Activated T-helper 1 cell treated with anti-CD3 and anti-CD28 coated beads, Interleukin-12 subunit alpha, Interleukin-12 subunit beta, Interleukin-2, Interleukin-4 antibody, amounts not matched to agents 30 ng/mL and 10 ng/mL and 1 ng/mL, durations not matched to agents 14 hours and 24 hours and 36 hours (primary cell): ENCODE measurements at regions of chr3 and their contacts with region 1.

Region 1: GRCh38 chr3:134600685-134601463 is 49.9 kb downstream of the KY start:
- DNase-seq: peak; percentile 43
- H3K4me3 Mint-ChIP-seq: no peak overlapping the region
- H3K27ac Mint-ChIP-seq: no peak overlapping the region
- H3K4me1 Mint-ChIP-seq: peaks cover 7% of the 10 kb centered on the region
- H3K27me3 Mint-ChIP-seq: peaks cover 10% of the 10 kb centered on the region

Region 2: GRCh38 chr3:134640872-134641470 is 40.1 kb after region 1 on chr3:
- intact Hi-C with region 1: loop called (anchors 1 kb)
- DNase-seq: no peak
- H3K4me3 Mint-ChIP-seq: no peak overlapping the region
- H3K27ac Mint-ChIP-seq: no peak overlapping the region
- H3K4me1 Mint-ChIP-seq: no peaks in the 10 kb centered on the region
- H3K27me3 Mint-ChIP-seq: no peaks in the 10 kb centered on the region

Region 3: DNA sequence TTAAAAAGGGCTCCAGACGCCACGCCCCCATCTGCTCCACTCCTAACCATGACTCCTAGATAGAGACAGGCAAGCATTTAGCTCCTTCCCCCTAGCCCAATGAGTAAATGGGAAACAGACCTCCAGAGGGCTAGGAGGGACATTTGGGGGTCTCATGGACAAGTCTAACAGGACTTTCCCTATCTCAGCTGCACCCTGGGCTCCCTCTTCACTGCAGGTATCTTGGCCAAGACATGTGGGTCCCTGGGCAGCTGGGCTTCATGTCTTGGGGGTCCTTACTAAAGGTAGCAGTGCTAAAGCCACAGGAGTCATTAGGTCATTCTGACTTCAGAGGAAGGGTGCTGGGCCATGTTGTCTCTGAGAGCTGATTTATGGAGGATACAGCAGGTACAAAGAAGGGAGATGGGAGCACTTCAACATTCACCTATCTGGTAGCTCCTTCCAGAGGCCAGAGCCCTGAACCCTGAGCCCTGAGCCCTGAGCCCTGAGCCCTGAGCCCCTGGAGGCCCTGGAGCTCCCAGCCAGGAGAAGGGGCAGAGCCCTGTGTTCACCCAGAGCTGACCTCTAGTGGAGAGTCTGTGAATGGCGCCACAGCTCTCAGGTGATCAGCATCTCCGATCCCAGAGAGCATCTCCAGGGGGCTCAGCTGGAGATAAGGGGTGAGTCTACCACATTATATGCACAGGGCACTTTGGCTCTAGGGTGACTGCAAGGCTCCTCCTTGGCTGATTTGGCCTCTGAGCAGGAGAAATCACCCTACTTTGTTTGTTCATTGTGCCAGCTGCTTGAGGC is 154.1 kb after region 1 on chr3:
- intact Hi-C with region 1: loop called (anchors 1 kb)
- DNase-seq: peak; percentile 6
- H3K4me3 Mint-ChIP-seq: no peak overlapping the region
- H3K27ac Mint-ChIP-seq: no peak overlapping the region
- H3K4me1 Mint-ChIP-seq: no peaks in the 10 kb centered on the region
- H3K27me3 Mint-ChIP-seq: peaks cover 5% of the 10 kb centered on the region

Region 4: DNA sequence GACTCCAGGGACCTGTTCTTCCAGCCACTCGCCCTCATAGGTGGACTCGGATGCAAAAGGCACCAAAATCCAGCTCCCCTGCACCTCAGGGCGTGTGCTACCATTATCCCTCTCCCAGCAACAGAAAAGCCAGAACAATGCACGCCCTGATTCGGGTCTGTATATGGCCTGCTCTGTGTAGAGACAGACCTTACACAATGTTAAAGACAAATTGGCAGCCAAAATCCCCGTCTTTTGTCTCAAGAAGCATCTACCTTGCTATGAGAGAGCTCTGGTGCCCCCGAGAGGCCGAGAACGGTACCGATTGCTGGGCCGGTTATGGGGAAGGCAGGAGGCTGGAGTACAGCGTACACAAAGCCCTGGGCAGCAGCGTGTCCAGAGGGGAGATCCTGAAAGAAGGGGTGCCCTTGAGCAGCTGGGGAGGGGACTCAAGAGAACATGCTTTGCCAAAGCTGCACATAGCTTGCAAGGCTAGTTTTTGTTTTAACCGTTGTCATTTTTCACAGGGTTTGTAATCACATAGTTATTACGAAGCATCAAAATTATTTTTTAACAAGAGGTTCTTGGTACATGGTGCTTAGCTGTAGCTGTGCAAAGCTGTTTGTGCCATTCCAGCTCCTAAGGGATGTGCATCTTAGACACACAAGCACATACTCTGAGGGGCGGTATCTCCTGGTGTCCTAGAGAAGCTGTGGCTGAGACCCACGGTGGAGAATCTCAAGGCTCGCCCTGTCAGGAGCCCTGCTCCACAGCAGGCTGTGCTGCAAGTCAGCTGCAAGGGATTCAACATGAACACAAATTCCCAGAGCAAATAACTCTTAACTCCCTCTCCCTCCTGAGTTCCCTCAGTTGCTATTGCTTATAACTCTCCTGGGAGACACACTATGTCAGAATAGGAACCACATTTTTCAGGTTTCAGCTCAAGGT is 903.1 kb after region 1 on chr3:
- intact Hi-C with region 1: loop called (anchors 5 kb)
- DNase-seq: no peak
- H3K4me3 Mint-ChIP-seq: no peak overlapping the region
- H3K27ac Mint-ChIP-seq: no peak overlapping the region
- H3K4me1 Mint-ChIP-seq: no peaks in the 10 kb centered on the region
- H3K27me3 Mint-ChIP-seq: no peaks in the 10 kb centered on the region

Region 5: GRCh38 chr3:135895106-135895733 is 1294.3 kb after region 1 on chr3:
- intact Hi-C with region 1: loop called (anchors 1 kb)
- DNase-seq: no peak
- H3K4me3 Mint-ChIP-seq: no peak overlapping the region
- H3K27ac Mint-ChIP-seq: no peak overlapping the region
- H3K4me1 Mint-ChIP-seq: no peaks in the 10 kb centered on the region
- H3K27me3 Mint-ChIP-seq: peaks cover 4% of the 10 kb centered on the region

Region 6: GRCh38 chr3:136042608-136043221 is 1441.8 kb after region 1 on chr3:
- intact Hi-C with region 1: loop called (anchors 2 kb)
- DNase-seq: no peak
- H3K4me3 Mint-ChIP-seq: no peak overlapping the region
- H3K27ac Mint-ChIP-seq: no peak overlapping the region
- H3K4me1 Mint-ChIP-seq: no peaks in the 10 kb centered on the region
- H3K27me3 Mint-ChIP-seq: peaks cover 7% of the 10 kb centered on the region